Esophagus muscularis mucosa (tissue), 4 donors: ENCODE measurements at regions of chr3 and their contacts with region 1.

Region 1: GRCh38 chr3:11379233-11379823 is 107.1 kb downstream of the ATG7 start:
- DNase-seq: no peak
- H3K4me3 ChIP-seq: no peak overlapping the region
- H3K27ac ChIP-seq: peak overlapping the region in 3 of 4 donors; percentile 5 to 33 (median 25)
- H3K4me1 ChIP-seq: peaks cover 8 to 26% (median 15%) of the 10 kb centered on the region in 4 donors
- H3K27me3 ChIP-seq: no peaks in the 10 kb centered on the region
- CTCF ChIP-seq: peak; percentile 61 to 67 (median 64)
- EP300 ChIP-seq: no peak
- POLR2A ChIP-seq: no peak

Region 2: DNA sequence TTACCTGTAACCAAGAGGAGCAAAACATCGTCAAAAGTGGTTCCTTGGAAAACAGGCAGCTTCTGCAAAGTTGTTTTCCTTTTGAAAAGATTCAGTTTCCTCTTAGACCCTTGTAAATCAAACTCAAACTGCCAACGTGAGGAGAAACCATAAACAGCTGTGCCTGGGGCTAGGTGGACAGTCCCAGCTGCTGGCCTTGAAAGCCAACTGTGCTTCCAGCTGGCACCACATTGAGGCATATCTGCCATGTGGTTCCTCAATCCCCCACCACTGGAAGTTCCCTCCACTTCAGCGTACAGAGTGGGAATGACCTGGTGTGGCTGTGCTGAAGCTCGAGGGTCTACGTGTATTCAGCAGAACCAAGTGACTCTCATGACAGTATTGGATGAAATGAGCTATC is 184.1 kb before region 1 on chr3:
- intact Hi-C with region 1: no loop called
- DNase-seq: no peak
- H3K4me3 ChIP-seq: no peak overlapping the region
- H3K27ac ChIP-seq: peak overlapping the region; percentile 7 to 40 (median 26)
- H3K4me1 ChIP-seq: peaks cover 1 to 40% (median 21%) of the 10 kb centered on the region in 4 donors
- H3K27me3 ChIP-seq: peaks cover 0 to 7% (median 0%) of the 10 kb centered on the region in 4 donors
- CTCF ChIP-seq: no peak
- EP300 ChIP-seq: no peak
- POLR2A ChIP-seq: no peak

Region 3: DNA sequence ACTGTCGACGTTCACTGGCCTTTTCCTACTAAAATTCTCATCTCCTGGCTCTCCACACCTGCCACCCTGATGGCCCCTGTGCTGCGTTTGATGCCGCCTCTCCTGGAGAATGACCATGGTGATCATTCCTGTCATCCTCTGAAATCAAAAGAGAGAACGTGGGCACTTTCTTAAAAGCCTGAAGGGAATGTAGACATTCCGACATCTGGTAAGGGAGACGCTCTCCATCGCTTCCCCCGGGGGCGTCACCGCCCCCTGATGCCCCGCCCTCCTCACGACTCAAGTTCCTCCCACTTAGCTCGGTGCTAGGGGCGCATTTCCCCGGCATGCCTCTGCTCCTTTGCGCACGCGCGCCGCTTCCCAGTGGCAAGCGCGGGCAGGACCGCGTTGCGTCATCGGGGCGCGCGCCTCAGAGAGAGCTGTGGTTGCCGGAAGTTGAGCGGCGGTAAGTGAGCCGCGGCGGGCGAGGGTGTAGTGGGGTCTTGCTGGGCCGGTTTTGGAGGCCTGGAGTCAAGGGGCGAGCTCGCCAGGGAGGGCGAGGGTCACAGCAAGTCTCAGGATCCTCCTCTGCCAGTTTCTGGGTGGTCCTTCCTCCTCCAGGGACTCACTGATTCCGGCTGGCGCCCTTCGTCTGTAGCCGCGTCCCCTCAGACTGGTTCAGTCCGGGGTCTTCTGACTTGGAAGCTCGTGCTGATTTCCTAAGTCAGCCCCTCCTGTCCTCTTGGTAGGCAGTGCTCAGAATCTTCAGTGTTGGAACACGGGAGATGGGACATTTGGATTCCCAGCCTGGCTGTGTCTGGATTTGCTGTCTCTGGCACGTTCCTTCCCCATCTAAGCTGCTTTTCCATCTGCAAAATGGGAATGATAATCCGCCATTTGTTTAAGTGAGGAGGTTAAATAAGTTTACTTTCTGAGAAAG is 107.1 kb before region 1 on chr3 and contains the start of gene ATG7:
- intact Hi-C with region 1: no loop called
- DNase-seq: peak; percentile 99
- H3K4me3 ChIP-seq: peak within 1 kb of the TSS; percentile 66 to 92 (median 84)
- H3K27ac ChIP-seq: peak within 1 kb of the TSS; percentile 78 to 84 (median 82)
- H3K4me1 ChIP-seq: peaks cover 17 to 24% (median 24%) of the 10 kb centered on the region in 4 donors
- H3K27me3 ChIP-seq: no peaks in the 10 kb centered on the region
- CTCF ChIP-seq: peak in 2 of 3 experiments; percentile 13 to 33
- EP300 ChIP-seq: no peak
- POLR2A ChIP-seq: peak; percentile 81
- total RNA-seq, gene ATG7: 20.6 to 50.4 (median 39.9) TPM

Region 4: DNA sequence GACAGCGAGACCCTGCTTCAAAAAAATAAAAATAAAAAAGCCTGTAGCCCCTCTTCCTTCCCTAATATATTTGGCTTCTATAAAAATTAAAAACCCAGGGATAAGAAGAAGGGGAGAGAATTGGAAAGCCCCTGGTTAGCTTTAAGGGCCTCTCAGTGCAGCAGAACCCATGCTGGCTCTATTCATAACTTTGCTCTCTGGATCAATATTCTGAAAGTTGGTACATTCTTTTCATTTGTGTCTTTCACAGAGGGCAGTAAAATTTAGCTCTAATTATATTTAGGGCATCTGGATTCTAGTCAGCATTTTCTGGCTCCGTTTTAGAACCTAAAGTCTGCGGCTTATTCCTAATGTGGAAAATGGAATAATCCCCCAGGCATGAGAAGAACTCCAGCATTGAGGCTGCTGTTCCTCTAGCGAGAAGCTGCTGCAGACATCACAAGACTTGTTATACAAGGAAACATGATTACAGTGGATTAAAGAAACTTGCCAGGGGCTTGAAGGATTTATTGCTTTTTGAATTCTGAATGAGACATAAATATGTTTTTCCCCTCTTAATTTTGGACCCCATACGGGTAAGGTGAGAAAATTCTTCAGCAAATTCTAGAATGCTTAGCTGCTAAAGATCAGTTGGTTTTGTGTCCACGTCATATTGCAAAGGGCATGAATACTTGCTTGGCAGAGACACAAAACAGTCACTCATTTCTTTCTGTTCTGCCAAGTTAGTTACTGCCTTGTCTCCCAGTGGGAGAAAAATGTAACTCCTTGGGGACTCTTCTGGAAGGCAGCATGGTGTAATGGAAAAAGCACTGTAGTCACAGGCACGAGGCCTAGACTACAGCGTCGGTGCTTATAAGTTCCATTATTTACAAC is 86.7 kb after region 1 on chr3:
- intact Hi-C with region 1: loop called (anchors 5 kb)
- DNase-seq: no peak
- H3K4me3 ChIP-seq: peak overlapping the region in 1 of 4 donors; percentile 6
- H3K27ac ChIP-seq: peak overlapping the region; percentile 86 to 88 (median 88)
- H3K4me1 ChIP-seq: peaks cover 30 to 43% (median 35%) of the 10 kb centered on the region in 4 donors
- H3K27me3 ChIP-seq: no peaks in the 10 kb centered on the region
- CTCF ChIP-seq: no peak
- EP300 ChIP-seq: peak; percentile 71
- POLR2A ChIP-seq: no peak

Region 5: DNA sequence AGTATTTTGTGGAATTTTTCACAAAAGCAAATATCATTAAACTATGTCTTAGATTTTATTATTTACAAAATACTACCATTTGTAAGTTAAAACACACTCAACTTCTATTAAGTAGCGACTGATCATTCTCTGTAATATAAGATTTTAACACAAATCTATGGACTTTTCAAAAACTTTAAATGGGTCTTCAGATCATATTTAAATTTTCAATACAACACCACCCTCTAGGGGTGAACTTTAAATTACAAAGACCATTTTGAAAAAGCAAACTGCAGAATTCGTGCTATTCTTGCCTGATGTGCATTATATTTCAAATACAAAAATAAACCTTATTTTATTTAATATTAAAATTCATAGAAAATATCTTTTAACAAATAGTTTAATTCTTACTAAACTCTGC is 272.6 kb after region 1 on chr3:
- intact Hi-C with region 1: loop called (anchors 2 kb)
- DNase-seq: no peak
- H3K4me3 ChIP-seq: no peak overlapping the region
- H3K27ac ChIP-seq: no peak overlapping the region
- H3K4me1 ChIP-seq: peaks cover 0 to 24% (median 13%) of the 10 kb centered on the region in 4 donors
- H3K27me3 ChIP-seq: no peaks in the 10 kb centered on the region
- CTCF ChIP-seq: peak; percentile 59 to 63 (median 62)
- EP300 ChIP-seq: no peak
- POLR2A ChIP-seq: no peak

Region 6: GRCh38 chr3:11719406-11720230 is 340.3 kb after region 1 on chr3:
- intact Hi-C with region 1: loop called (anchors 10 kb)
- DNase-seq: no peak
- H3K4me3 ChIP-seq: peak overlapping the region; percentile 77 to 96 (median 84)
- H3K27ac ChIP-seq: peak overlapping the region; percentile 90 to 96 (median 94)
- H3K4me1 ChIP-seq: peaks cover 19 to 36% (median 32%) of the 10 kb centered on the region in 4 donors
- H3K27me3 ChIP-seq: no peaks in the 10 kb centered on the region
- CTCF ChIP-seq: no peak
- EP300 ChIP-seq: no peak
- POLR2A ChIP-seq: no peak

Region 7: GRCh38 chr3:11808231-11808630 is 428.9 kb after region 1 on chr3:
- intact Hi-C with region 1: loop called (anchors 5 kb)
- DNase-seq: no peak
- H3K4me3 ChIP-seq: no peak overlapping the region
- H3K27ac ChIP-seq: peak overlapping the region in 3 of 4 donors; percentile 21 to 44 (median 24)
- H3K4me1 ChIP-seq: peaks cover 0 to 31% (median 24%) of the 10 kb centered on the region in 4 donors
- H3K27me3 ChIP-seq: no peaks in the 10 kb centered on the region
- CTCF ChIP-seq: no peak
- EP300 ChIP-seq: no peak
- POLR2A ChIP-seq: no peak

Region 8: GRCh38 chr3:11846281-11847034 is 467.1 kb after region 1 on chr3 and contains the start of gene TAMM41:
- intact Hi-C with region 1: loop called (anchors 5 kb)
- DNase-seq: peak; percentile 96
- H3K4me3 ChIP-seq: peak within 1 kb of the TSS; percentile 79 to 92 (median 86)
- H3K27ac ChIP-seq: peak within 1 kb of the TSS; percentile 82 to 91 (median 89)
- H3K4me1 ChIP-seq: peaks cover 21 to 33% (median 28%) of the 10 kb centered on the region in 4 donors
- H3K27me3 ChIP-seq: no peaks in the 10 kb centered on the region
- CTCF ChIP-seq: peak; percentile 79 to 91 (median 81)
- EP300 ChIP-seq: no peak
- POLR2A ChIP-seq: no peak
- total RNA-seq, gene TAMM41: 4.8 to 8.3 (median 7.2) TPM